Naive thymus-derived CD4-positive, alpha-beta T cell (primary cell): ENCODE measurements at regions of chr16 and their contacts with region 1.

Region 1: DNA sequence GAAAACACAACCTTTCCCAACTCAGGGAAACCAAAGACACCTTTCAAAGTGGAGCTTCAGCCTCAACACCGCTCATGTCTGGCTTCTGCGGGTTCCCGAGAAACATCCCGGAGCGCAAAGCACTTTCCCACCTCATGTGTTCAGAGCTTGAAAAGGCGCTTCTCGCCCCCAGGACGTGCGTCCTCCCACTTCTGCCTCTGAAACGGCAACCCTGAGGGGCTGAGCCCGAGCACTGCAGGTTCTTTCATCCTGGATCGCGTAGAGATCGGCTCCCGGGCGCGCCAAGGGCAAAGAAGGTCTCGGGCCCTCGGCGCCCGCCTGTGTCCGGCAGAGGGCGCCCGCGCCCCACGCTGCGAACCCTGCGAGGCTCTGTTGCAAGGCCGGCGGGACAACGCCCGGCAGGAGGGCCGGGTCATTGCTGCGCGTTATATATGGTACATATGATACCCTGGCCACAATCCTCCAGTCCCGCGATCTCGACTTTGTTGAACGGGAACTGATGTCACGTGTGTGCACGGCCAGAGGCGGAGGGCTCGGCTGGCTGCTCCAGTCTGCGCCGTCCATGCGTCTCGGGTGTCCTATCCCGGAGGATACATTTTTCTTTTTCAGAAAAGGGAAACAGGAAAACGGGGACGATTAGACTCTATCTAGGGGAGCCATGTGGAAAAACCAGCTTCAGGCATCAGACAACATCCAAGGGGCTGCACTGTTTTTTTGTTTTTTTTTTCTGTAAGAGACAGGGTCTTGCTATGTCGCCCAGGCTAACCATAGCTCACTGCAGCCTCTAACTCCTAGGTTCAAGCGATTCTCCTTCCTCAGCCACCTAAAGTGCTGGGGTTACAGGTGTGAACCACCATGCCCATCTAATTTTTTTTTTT is 19.1 kb downstream of the COQ7 start:
- DNase-seq: peak; percentile 44 to 90 (median 71)
- ATAC-seq: peak; percentile 96
- H3K4me3 ChIP-seq: peak overlapping the region; percentile 36
- H3K4me3 Mint-ChIP-seq: peak overlapping the region; percentile 40 to 81 (median 69)
- H3K27ac ChIP-seq: no peak overlapping the region
- H3K27ac Mint-ChIP-seq: peak overlapping the region in 2 of 9 donors; percentile 31 to 77
- H3K4me1 ChIP-seq: peaks cover 4 to 10% of the 10 kb centered on the region in 2 donors
- H3K4me1 Mint-ChIP-seq: peaks cover 0 to 7% (median 0%) of the 10 kb centered on the region in 7 donors
- H3K27me3 ChIP-seq: no peaks in the 10 kb centered on the region
- H3K27me3 Mint-ChIP-seq: peaks cover 0 to 14% (median 6%) of the 10 kb centered on the region in 5 donors

Region 2: DNA sequence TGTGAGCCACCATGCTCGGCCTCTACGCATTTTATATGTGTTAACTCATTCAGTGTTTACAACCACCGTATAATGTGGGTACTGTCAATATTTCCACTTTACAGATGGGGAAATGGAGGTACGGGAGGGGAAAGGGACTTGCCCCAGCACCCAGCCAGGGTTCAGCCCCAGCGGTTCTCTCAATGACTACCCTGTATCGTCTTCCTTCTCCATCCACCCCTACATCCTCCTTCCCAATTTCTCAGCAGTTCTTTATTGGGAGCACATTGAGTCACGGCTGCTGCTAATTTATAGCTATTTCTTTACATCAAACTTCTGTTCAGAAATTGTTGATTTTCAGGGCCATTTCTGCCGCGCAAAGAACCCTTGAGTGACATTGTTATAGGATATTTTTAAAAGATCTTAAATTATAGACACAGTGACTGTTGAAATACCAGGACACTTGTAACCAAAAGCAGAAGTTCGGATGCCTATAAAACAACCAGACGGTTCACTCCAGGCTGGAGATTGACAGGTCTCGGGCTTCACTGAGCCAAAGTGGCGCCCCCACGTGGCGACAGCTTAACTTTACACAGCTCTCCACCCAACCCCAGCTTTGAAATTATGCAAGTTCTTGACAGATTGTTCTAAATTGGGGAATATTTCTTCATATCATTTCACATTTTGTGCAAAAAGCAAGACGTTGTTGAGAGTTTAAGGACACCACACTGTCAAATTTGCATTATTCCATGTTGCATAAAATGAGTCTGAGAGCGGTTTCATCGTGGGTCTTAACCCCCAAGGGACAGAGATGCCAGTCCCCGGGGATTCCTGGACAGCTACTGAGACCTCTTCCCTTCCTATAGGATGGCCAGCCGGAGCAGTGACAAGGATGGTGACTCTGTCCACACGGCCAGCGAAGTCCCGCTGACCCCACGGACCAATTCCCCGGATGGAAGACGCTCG is 93.3 kb after region 1 on chr16:
- CTCF ChIA-PET with region 1: no interaction called
- POLR2A ChIA-PET with region 1: no interaction called
- intact Hi-C with region 1: loop called in 1 of 2 experiments (anchors 1 kb)
- DNase-seq: peak in 2 of 9 donors; percentile 21 to 60
- ATAC-seq: peak; percentile 82
- H3K4me3 ChIP-seq: no peak overlapping the region
- H3K4me3 Mint-ChIP-seq: no peak overlapping the region
- H3K27ac ChIP-seq: no peak overlapping the region
- H3K27ac Mint-ChIP-seq: peak overlapping the region in 1 of 9 donors; percentile 41
- H3K4me1 ChIP-seq: no peaks in the 10 kb centered on the region
- H3K4me1 Mint-ChIP-seq: no peaks in the 10 kb centered on the region
- H3K27me3 ChIP-seq: no peaks in the 10 kb centered on the region
- H3K27me3 Mint-ChIP-seq: peaks cover 0 to 27% (median 18%) of the 10 kb centered on the region in 5 donors

Region 3: DNA sequence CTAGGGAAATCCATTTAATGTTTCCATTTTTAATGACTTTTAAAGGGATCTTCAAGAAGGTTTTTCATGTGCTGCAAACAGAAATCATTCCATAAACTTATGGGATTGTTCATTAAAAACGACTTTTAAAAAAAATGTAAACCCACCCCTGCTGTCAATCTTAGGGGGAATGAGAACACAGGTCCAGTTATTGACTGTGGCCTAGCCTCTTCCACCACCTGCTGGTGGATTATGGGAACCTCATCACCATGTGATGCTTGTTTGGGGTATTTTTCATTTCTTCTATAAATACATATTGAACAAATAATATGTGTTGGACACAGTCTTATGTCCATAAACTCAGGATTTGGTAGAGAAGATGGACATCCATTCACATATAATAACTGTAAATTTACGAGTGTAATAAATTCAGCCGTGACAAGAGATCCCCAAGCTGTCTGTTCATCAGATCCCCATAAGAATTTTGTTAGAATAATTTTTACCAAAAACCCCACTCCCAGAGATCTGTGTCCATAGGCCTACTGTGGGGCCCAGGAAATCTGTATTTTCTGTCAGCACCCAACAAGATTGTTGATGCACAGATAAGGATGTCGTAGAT is 289.1 kb after region 1 on chr16:
- CTCF ChIA-PET with region 1: no interaction called
- POLR2A ChIA-PET with region 1: no interaction called
- intact Hi-C with region 1: loop called in 1 of 2 experiments (anchors 1 kb)
- DNase-seq: peak in 3 of 9 donors; percentile 4 to 29 (median 9)
- ATAC-seq: peak; percentile 45
- H3K4me3 ChIP-seq: no peak overlapping the region
- H3K4me3 Mint-ChIP-seq: no peak overlapping the region
- H3K27ac ChIP-seq: no peak overlapping the region
- H3K27ac Mint-ChIP-seq: no peak overlapping the region
- H3K4me1 ChIP-seq: no peaks in the 10 kb centered on the region
- H3K4me1 Mint-ChIP-seq: peaks cover 0 to 12% (median 0%) of the 10 kb centered on the region in 7 donors
- H3K27me3 ChIP-seq: no peaks in the 10 kb centered on the region
- H3K27me3 Mint-ChIP-seq: peaks cover 0 to 6% (median 3%) of the 10 kb centered on the region in 5 donors

Region 4: DNA sequence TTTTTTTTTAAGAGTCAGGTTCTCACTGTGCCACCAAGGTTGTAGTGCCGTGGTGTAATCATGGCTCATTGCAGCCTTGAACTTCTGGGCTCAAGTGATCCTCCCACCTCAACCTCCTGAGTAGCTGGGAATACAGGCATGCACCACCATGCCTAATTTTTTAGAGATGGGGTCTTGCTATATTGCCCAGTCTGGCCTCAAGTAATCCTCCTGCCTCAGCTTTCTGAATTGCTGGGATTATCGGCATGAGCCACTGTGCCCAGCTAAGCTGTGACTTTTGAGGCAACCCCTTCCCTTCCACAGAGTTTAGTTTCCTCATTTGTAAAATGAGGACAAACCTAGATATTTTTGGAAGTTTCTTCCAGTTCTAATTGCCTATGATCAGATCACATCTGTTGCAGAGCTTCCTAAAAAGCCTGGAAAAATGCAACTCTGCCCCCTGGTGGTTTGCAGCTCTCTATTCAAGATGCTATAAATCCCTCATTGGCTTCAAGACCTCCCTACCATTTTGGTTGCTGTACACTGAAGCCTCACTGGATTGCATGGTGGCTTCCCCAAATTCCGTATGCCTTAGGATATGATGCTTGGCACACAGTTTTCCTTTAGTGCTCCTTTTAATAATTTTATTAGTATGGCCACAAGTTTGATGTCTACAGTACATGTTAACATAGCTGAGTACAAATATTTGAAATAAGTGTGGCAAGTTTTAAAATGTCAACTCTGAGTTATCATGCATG is 416.0 kb after region 1 on chr16:
- CTCF ChIA-PET with region 1: interaction called, 13 read pairs
- POLR2A ChIA-PET with region 1: no interaction called
- intact Hi-C with region 1: loop called in 1 of 2 experiments (anchors 1 kb)
- DNase-seq: peak in 8 of 9 donors; percentile 23 to 59 (median 48)
- ATAC-seq: peak; percentile 71
- H3K4me3 ChIP-seq: no peak overlapping the region
- H3K4me3 Mint-ChIP-seq: no peak overlapping the region
- H3K27ac ChIP-seq: no peak overlapping the region
- H3K27ac Mint-ChIP-seq: no peak overlapping the region
- H3K4me1 ChIP-seq: no peaks in the 10 kb centered on the region
- H3K4me1 Mint-ChIP-seq: no peaks in the 10 kb centered on the region
- H3K27me3 ChIP-seq: no peaks in the 10 kb centered on the region
- H3K27me3 Mint-ChIP-seq: no peaks in the 10 kb centered on the region

Region 5: DNA sequence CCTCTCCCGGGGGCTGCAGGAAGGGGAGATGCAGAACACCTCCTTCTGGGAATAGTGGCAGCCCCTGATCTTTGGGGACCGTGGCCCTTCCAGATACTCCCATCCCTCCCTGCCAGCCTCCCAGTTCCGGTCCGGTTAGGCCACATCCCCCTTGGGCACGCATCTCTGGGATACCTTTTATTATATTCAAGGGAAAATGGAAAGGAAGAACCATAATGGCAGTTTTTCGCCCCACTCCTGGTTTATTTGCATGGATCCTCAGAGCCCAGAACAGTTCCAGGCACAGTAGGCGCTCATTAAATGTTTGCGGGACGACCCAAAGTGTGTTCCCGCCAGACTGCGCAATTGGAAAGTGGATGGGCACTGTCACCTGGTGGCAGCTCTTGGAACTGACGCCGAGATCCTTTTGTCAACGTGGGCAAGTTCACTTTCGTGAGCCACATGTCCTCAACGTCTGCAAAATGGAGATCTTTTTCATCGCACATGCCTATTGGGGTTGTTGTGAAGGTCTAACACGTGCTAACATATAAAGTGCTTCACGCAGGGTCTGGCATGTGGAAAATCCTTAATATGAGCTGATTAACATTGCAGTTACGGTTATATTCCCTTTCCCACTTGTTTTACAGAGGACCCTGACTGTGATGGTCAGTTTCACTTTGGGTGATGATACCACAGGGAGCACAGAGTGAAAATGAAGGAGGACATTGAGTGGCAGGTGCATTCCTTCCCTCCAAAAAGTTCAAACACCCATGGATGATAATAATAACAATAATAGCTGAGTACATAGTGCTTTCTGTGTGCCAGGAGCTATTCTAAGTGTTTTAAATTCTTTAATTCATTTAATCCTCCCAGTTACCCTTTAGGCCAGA is 799.7 kb after region 1 on chr16:
- CTCF ChIA-PET with region 1: no interaction called
- POLR2A ChIA-PET with region 1: no interaction called
- intact Hi-C with region 1: loop called in 1 of 2 experiments (anchors 5 kb)
- DNase-seq: peak; percentile 66 to 85 (median 78)
- ATAC-seq: peak; percentile 78
- H3K4me3 ChIP-seq: peak overlapping the region; percentile 70
- H3K4me3 Mint-ChIP-seq: peak overlapping the region; percentile 84 to 96 (median 90)
- H3K27ac ChIP-seq: no peak overlapping the region
- H3K27ac Mint-ChIP-seq: peak overlapping the region in 6 of 9 donors; percentile 17 to 72 (median 52)
- H3K4me1 ChIP-seq: peaks cover 9 to 23% of the 10 kb centered on the region in 2 donors
- H3K4me1 Mint-ChIP-seq: peaks cover 12 to 26% (median 22%) of the 10 kb centered on the region in 7 donors
- H3K27me3 ChIP-seq: peaks cover 0 to 12% of the 10 kb centered on the region in 2 donors
- H3K27me3 Mint-ChIP-seq: peaks cover 4 to 39% (median 13%) of the 10 kb centered on the region in 5 donors

Region 6: DNA sequence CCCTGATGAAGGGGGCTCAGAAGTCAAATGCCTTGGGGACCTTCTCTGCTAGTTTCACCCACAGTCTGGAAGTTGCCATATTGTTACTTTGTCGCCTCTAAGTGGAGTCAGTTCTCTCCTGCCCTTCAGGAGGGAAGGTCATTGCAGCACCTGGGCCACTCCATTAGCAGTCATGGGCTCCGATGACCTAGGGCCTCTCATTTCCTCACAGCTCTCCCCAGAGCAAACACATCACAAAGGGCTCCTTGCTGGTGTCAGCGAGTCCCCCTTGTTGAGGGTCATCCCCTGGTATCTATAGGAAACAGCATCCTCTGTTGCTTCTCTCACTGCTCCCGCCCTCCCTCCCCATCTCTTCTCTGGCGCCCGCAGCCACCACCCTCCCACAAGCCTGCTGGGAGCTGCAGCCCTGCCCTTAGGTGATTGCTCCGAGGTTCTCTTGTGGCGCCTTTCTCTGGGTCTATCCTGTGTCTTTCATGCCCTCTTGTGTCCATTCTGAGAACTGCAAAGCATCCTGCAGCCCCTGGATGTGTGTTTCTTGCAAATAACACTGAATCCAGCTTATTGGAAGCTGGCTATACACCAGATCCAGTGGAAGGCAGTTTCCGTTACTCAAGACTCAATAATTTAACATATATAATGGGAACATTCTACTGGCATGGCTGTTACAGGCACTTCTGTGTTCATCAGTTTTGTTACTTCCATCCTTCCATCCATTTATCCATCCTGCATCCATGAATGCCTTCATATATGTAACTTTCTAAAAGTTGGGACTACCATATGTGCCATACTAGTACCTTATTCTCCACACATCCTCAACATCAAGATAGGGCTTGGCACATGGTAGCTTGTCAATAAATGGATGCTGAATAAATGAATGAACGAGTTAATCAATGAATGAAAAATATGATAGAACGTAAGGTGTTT is 1296.8 kb after region 1 on chr16:
- CTCF ChIA-PET with region 1: no interaction called
- POLR2A ChIA-PET with region 1: no interaction called
- intact Hi-C with region 1: loop called in 1 of 2 experiments (anchors 10 kb)
- DNase-seq: peak in 7 of 9 donors; percentile 3 to 54 (median 37)
- ATAC-seq: peak; percentile 67
- H3K4me3 ChIP-seq: no peak overlapping the region
- H3K4me3 Mint-ChIP-seq: peak overlapping the region in 1 of 10 donors; percentile 22
- H3K27ac ChIP-seq: no peak overlapping the region
- H3K27ac Mint-ChIP-seq: no peak overlapping the region
- H3K4me1 ChIP-seq: peaks cover 0 to 4% of the 10 kb centered on the region in 2 donors
- H3K4me1 Mint-ChIP-seq: peaks cover 0 to 6% (median 0%) of the 10 kb centered on the region in 7 donors
- H3K27me3 ChIP-seq: no peaks in the 10 kb centered on the region
- H3K27me3 Mint-ChIP-seq: peaks cover 11 to 29% (median 19%) of the 10 kb centered on the region in 5 donors